ENCODE measurements at regions of chr4 and their contacts with region 1.

Region 1: DNA sequence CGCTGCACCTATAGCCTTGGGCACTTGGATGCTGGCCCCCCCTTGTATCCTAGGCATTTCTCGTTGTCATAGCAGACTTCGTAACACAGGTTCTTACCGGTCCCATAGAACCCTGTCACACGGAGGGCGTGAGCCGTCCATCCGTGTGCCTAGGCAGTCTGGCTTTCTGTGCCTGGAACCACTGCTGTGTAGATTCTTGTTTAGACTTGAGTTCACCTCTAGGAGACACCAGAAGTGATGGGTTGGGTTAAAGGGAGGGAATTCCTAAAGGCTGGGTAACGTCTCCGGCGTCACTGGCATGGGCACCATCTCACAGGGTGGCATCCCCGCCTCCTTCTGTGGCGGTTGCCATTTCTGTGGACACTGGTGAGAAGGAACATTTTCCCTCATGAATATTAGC is 13.5 kb upstream of the NKX1-1 start:
- DNase-seq: no peak
- H3K4me3 ChIP-seq: no peak overlapping the region
- H3K27ac ChIP-seq: no peak overlapping the region
- H3K4me1 ChIP-seq: no peaks in the 10 kb centered on the region
- CTCF ChIP-seq: no peak

Region 2: GRCh38 chr4:610411-611261 is 809.1 kb before region 1 on chr4:
- CTCF ChIA-PET with region 1: no interaction called
- POLR2A ChIA-PET with region 1: no interaction called
- intact Hi-C with region 1: no loop called
- DNase-seq: no peak
- H3K4me3 ChIP-seq: no peak overlapping the region
- H3K27ac ChIP-seq: no peak overlapping the region
- H3K4me1 ChIP-seq: no peaks in the 10 kb centered on the region
- CTCF ChIP-seq: no peak

Region 3: DNA sequence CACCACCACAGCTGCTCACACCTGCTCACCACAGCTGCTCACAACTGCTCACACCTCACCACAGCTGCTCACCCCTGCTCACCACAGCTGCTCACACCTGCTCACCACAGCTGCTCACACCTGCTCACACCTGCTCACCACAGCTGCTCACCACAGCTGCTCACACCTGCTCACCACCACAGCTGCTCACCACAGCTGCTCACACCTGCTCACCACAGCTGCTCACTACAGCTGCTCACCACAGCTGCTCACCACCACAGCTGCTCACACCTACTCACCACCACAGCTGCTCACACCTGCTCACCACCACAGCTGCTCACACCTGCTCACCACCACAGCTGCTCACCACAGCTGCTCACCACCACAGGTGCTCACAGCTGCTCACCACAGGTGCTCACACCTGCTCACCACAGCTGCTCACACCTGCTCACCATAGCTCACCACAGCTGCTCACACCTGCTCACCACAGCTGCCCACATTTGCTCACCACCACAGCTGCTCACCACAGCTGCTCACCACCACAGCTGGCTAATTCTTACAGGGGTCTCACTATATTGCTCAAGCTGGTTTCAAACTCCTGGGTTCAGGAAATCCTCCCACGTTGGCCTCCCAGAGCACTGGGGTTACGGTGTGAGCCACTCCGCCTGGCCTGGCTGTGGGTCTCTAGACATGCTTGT is 563.3 kb before region 1 on chr4:
- CTCF ChIA-PET with region 1: no interaction called
- POLR2A ChIA-PET with region 1: no interaction called
- intact Hi-C with region 1: no loop called
- DNase-seq: no peak
- H3K4me3 ChIP-seq: no peak overlapping the region
- H3K27ac ChIP-seq: peak overlapping the region; percentile 31
- H3K4me1 ChIP-seq: no peaks in the 10 kb centered on the region
- CTCF ChIP-seq: no peak

Region 4: DNA sequence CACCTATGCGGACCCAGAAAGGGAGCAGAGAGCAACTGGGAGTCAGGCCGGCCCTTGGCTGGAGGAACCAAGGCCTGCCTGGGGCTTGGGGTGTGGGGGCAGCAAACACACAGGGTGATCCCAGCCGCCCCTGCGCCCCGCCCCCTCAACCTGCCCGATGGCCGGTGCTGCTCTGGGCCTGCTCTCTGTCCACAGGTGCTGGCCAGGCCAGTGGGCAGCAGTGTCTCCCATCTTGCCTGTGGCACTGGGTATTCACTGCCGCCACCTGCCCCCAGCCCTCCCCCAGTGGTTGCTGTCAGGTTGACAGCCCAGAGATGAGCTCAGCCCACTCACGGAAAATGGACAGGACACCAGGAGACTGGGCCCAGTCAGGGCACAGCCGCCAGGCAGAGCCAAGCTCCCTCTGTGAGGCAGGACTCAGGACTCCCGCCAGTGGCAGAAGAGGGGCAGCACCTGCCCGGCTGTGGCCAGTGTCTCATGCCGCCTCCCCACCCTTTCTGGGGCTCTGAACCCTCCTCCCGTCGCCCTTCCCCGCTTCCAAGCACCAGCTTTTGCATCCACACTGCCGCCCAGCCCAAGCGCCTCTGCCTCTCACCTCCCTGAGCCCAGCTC is 18.2 kb before region 1 on chr4:
- CTCF ChIA-PET with region 1: no interaction called
- POLR2A ChIA-PET with region 1: no interaction called
- intact Hi-C with region 1: no loop called
- DNase-seq: no peak
- H3K4me3 ChIP-seq: no peak overlapping the region
- H3K27ac ChIP-seq: no peak overlapping the region
- H3K4me1 ChIP-seq: no peaks in the 10 kb centered on the region
- CTCF ChIP-seq: no peak

Region 5: DNA sequence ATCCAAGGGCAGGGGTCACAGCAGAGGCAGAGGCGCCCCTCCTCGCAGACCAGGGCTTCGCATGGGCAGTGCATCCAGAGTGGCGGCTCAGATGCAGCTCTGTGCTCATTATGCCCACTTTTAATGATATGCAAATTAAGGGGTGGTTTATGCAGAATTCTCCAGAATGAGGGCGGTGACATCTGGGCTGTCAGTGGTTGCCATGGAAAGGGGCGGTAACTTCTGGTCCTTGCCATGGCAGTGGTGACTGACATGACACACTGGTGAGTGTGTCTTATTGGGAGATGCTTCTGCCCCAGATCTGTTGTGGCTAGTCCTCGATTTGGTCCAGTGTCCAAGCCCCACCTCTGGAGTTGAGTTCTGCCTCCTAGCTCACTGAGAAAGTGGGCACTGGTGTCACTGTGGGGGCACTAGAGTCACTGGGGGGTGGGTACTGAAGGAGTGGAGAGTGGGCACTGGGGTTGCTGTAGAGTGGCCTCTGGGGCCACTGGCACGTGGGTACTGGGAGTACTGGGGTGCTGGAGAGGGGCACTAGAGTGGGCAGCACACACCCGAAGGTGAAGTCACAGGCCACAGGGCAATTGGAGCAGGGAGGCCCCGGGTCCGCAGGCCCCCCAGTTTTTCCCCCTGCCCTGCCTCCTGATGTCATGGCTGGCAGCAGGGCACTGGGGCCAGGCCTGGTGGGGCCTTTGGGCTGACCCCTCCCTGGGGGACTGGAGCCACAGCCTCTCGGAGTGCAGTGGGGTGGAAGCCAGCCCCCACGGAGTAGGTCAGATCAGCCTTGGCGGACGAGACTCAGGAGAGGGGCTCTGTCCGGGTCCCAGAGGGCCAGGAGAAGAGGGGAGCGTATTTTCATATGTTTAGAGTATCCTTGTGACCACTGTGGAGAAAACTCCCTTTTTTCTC is 85.1 kb after region 1 on chr4:
- CTCF ChIA-PET with region 1: no interaction called
- POLR2A ChIA-PET with region 1: no interaction called
- intact Hi-C with region 1: loop called (anchors 5 kb)
- DNase-seq: no peak
- H3K4me3 ChIP-seq: no peak overlapping the region
- H3K27ac ChIP-seq: no peak overlapping the region
- H3K4me1 ChIP-seq: no peaks in the 10 kb centered on the region
- CTCF ChIP-seq: no peak

Measured in OCI-LY7 (cell line).